Dendritic cell treated with granulocyte-macrophage colony-stimulating factor and Interleukin-4, amounts not matched to agents 40 ng/mL and 50 ng/mL, for 4 days (primary cell): ENCODE measurements at regions of chr1 and their contacts with region 1.

Region 1: DNA sequence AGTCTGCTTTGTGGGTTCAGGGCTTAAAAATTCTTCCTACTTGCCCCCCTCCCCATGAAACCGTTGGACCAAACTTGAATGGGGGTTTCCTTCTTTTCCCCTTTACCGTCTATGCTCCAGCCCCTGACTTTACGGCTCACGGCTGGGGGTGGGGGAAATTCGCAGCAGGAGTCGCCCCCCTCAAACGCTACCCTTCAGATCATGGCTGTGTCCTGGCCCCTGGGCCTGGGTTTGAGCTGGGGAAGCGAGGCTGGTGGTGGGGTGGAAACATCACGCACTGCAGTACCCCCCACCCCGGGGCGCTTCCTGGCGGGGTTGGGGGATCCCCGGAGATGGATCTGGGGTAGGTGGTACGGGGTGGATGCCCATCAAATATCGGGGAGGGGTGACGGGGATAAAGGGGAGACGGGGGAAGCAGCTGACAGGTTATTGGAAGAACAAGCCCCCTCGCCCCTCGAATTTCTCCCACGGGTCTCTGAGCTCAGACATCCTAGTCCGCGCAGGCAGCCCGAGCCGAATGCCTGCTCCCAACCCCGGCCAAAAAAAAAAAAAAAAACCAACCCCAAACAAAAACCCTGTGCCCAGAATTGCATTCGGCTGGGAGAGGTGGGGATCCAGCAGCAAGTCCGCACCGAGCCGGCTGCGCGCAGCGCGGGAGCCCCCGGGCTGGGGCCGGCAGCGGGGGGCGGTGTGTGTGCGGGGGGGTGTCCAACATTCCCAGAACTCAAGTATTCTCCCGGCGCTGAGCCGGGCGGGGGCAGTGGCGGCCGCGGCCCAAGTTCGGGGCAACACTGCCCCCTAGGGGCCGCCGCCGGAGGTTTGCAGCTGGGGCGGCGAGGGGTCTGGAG is 59.0 kb upstream of the ACOT11 start:
- H3K4me3 Mint-ChIP-seq: peak overlapping the region; percentile 81
- H3K27ac Mint-ChIP-seq: peak overlapping the region; percentile 90
- H3K4me1 Mint-ChIP-seq: peaks cover 54% of the 10 kb centered on the region
- H3K27me3 Mint-ChIP-seq: peaks cover 30% of the 10 kb centered on the region

Region 2: GRCh38 chr1:54070171-54070837 is 418.7 kb before region 1 on chr1:
- intact Hi-C with region 1: loop called (anchors 2 kb)
- H3K4me3 Mint-ChIP-seq: no peak overlapping the region
- H3K27ac Mint-ChIP-seq: no peak overlapping the region
- H3K4me1 Mint-ChIP-seq: peaks cover 7% of the 10 kb centered on the region
- H3K27me3 Mint-ChIP-seq: no peaks in the 10 kb centered on the region

Region 3: GRCh38 chr1:54227091-54227602 is 261.9 kb before region 1 on chr1:
- intact Hi-C with region 1: loop called (anchors 10 kb)
- H3K4me3 Mint-ChIP-seq: no peak overlapping the region
- H3K27ac Mint-ChIP-seq: peak overlapping the region; percentile 79
- H3K4me1 Mint-ChIP-seq: peaks cover 50% of the 10 kb centered on the region
- H3K27me3 Mint-ChIP-seq: no peaks in the 10 kb centered on the region

Region 4: DNA sequence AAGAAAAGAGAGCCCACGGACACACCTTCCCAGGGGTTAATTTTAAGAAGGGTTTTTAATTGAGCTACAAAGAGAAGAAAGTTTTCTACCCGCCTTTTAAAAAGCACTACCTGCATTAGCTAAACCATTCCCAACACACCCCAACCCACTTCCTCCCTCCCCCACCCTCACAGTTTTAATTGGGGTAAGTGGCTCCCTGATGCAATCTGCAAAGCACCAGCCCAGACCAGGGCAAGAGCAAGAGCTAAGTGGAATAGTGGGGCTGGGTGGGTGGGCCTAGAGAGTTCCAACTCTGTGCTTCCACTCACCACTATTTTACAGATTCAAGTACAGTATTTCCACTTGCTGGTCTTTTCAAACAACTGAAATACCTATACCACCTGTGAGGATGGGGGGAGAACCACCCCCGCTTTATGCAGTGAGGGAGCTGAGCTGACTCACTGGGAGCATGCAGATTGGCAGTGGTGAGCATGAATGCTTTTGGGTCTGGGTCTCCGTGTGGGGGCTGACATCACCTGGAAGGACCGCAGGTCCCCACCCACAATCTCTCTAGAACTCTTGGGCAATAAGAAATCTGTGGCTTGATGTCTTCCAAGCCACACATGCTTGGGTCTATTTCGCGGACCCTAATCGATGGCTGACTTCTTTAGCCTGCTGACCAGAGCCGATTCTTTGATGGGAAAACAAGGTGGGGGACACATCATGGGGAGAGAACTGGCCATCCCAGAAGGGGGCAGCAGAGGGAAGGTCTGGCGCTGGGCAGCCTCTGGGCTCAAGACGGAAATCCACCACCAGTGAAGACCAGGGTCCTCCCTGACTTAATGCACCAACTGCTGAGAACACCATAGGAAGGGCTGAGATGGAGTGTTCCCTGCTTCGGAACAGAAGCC is 178.3 kb before region 1 on chr1:
- intact Hi-C with region 1: loop called (anchors 5 kb)
- H3K4me3 Mint-ChIP-seq: no peak overlapping the region
- H3K27ac Mint-ChIP-seq: no peak overlapping the region
- H3K4me1 Mint-ChIP-seq: peaks cover 7% of the 10 kb centered on the region
- H3K27me3 Mint-ChIP-seq: no peaks in the 10 kb centered on the region

Region 5: DNA sequence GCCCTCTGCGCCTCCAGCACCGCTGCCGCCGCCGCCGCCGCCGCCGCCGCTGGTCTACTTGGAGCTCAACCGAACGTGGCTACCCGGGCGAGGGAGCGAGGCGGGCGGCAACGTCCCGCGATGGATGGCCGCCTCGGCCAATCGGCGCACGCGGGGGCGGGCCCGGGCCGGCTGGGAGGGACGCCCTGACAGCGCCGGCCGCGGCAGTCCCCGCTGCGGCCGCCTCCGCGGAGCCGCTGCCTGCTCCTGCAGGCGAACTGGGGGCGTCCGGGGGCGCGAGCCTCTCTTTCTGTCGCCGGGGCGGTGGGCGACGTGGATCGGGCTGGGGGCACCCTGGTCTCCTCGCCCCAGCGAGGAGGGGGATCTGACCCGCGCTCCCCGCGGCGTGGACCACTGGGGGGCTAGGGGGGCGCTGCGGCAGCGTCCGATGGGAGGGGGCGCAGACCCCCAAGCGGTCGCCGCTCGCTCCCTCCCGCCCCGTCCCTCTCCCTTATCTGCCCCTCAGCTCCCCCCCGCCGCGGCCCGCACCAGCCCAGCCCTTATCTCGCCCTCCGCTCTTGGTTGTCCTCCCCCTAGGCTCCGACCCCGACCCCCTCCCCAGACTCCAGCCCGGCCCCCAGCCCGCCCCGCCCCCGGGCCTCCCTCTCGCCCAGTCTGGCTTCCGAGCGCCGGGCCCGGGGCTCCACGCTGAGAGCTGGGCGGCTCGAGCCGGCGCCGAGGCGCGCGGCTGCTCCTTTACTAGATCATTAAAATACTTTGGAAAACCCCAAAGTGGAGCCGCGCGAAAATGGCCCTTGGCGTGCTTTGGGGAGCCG is 82.5 kb before region 1 on chr1 and contains the start of gene SSBP3:
- intact Hi-C with region 1: loop called (anchors 1 kb)
- H3K4me3 Mint-ChIP-seq: peak within 1 kb of the TSS; percentile 83
- H3K27ac Mint-ChIP-seq: peak within 1 kb of the TSS; percentile 96
- H3K4me1 Mint-ChIP-seq: peaks cover 54% of the 10 kb centered on the region
- H3K27me3 Mint-ChIP-seq: no peaks in the 10 kb centered on the region